Sigmoid colon (tissue), 7 donors: ENCODE measurements at regions of chr16 and their contacts with region 1.

Region 1: GRCh38 chr16:75464130-75464918 is at the start of gene TMEM170A:
- DNase-seq: peak; percentile 100
- H3K4me3 ChIP-seq: peak within 1 kb of the TSS; percentile 86 to 93 (median 88)
- H3K27ac ChIP-seq: peak within 1 kb of the TSS; percentile 96 to 99 (median 97)
- H3K4me1 ChIP-seq: peaks cover 0 to 20% (median 14%) of the 10 kb centered on the region in 4 donors
- H3K27me3 ChIP-seq: no peaks in the 10 kb centered on the region
- CTCF ChIP-seq: peak; percentile 100
- EP300 ChIP-seq: no peak
- POLR2A ChIP-seq: peak; percentile 94
- total RNA-seq, gene TMEM170A: 12.7 to 18.2 (median 15.3) TPM

Region 2: DNA sequence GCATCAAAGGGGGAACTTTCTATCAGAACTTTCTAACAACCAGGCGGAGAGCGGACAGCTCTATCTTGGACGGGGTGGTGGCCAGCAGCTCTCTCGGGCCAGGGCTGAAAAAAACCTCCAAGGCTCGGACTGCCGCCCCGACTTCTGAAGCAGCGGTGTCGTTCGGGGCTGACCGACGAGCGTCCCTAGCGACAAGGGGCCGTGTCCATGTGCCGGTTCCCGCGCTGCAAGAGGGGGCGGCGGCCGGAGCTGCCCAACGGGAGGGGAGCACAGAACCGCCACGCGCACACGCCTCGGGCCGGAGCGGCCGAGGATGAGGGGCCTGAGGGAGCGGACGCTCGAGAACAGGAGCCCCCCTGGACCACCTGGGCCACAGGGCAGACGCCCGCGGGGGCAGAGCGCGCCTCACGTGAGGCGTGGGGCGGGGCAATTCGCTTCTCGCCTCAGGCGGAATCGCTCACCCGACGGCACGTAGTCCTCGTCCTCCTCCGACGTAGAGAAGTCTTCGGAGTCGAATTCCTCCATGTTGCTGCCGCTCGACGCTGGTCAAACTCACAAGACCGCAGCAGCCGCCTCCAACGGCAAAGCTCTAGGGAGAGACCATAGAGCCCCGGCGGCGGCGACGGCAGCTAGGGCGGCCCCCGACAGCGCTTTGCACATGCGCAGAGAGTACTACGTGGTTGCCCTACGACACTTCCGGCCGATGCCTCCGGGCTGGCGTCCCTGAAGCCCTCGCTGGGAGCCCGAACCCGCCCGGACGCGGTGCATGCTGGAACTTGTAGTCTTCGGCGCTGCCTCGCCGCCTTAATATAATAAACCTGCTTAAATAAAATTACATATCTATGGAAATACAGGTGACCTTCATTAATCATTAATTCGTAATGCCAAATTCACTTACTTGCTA is 31.2 kb before region 1 on chr16 and contains the start of gene CFDP1:
- intact Hi-C with region 1: loop called (anchors 1 kb)
- DNase-seq: peak; percentile 98
- H3K4me3 ChIP-seq: peak within 1 kb of the TSS; percentile 75 to 92 (median 84)
- H3K27ac ChIP-seq: peak within 1 kb of the TSS; percentile 95 to 98 (median 96)
- H3K4me1 ChIP-seq: peaks cover 0 to 17% (median 11%) of the 10 kb centered on the region in 4 donors
- H3K27me3 ChIP-seq: no peaks in the 10 kb centered on the region
- CTCF ChIP-seq: no peak
- EP300 ChIP-seq: no peak
- POLR2A ChIP-seq: peak; percentile 55 to 64
- total RNA-seq, gene CFDP1: 42.1 to 61.1 (median 48.2) TPM

Region 3: GRCh38 chr16:75647492-75648264 is 183.4 kb after region 1 on chr16 and contains the starts of genes KARS1 and TERF2IP:
- intact Hi-C with region 1: loop called (anchors 5 kb)
- DNase-seq: peak; percentile 96
- H3K4me3 ChIP-seq: peak within 1 kb of the TSS; percentile 92 to 98 (median 94)
- H3K27ac ChIP-seq: peak within 1 kb of the TSS; percentile 96 to 100 (median 97)
- H3K4me1 ChIP-seq: peaks cover 0 to 58% (median 52%) of the 10 kb centered on the region in 4 donors
- H3K27me3 ChIP-seq: no peaks in the 10 kb centered on the region
- CTCF ChIP-seq: no peak
- EP300 ChIP-seq: no peak
- POLR2A ChIP-seq: peak; percentile 95 to 98
- total RNA-seq, gene KARS1: 98.3 to 113 (median 111) TPM
- total RNA-seq, gene TERF2IP: 49.0 to 76.0 (median 65.5) TPM